ENCODE measurements at regions of chr6 and their contacts with region 1.

Region 1: DNA sequence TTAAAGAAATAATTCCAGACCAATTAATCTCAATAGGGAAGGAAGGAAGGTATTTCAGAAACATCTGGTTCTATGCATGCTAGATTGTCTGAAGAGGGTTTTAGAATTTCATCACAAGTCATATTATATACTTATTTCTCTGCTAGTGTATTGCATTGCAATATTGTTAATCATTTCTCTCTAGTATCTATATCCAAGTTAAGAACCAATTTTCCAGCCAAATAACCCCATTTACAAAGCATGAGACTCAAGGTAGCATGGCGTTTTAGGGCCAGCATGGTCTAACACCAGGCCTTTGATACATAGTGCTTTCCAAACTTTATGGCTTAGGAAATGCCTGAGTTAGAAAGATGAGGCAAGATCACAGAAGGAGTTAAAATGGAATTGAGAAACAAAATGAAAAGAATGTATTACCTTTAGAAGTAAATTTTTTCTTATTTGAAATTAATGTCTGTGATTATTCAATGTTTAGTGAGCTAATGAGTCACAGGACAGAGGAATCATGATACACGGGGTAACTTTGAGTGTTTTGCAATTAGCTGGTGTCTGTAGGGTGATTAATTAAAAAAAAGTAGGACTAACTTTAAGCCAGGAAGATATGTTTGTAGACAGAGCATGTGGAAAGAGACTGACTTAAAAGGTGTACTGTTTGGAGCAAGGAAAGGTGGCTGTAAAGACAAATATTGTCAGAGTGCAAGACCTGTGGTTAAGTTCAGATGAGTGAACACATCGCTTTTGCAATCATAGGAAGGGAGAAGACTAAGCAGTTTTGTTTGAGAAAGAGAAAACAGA is 1006.2 kb upstream of the CITED2 start:
- DNase-seq: peak; percentile 2
- ATAC-seq: no peak
- H3K4me3 ChIP-seq: no peak overlapping the region
- H3K27ac ChIP-seq: no peak overlapping the region
- H3K4me1 ChIP-seq: peaks cover 4% of the 10 kb centered on the region; the same call in 1 of the 2 replicates
- H3K27me3 ChIP-seq: no peaks in the 10 kb centered on the region
- CTCF ChIP-seq: no peak

Region 2: GRCh38 chr6:140124498-140124897 is 256.1 kb before region 1 on chr6:
- CTCF ChIA-PET with region 1: no interaction called
- POLR2A ChIA-PET with region 1: no interaction called
- intact Hi-C with region 1: loop called (anchors 5 kb)
- DNase-seq: no peak
- ATAC-seq: no peak
- H3K4me3 ChIP-seq: no peak overlapping the region
- H3K27ac ChIP-seq: no peak overlapping the region
- H3K4me1 ChIP-seq: no peaks in the 10 kb centered on the region
- H3K27me3 ChIP-seq: no peaks in the 10 kb centered on the region
- CTCF ChIP-seq: no peak

Region 3: DNA sequence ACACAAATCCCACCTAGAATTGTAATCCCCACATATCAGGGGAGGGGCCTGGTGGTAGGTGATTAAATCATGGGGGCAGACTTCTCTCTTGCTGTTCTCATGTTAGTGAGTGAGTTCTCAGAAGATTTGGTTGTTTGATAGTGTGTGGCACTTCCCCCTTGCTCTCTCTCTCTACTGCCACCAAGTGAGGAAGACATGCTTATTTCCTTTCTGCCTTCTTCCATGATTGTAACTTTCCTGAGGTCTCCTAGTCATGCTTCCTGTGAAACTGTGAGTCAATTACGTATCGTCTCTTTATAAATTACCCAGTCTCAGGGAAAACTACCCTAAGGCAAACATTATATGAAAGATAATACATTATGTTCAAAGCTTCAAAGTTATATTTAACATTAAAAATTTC is 291.3 kb after region 1 on chr6:
- CTCF ChIA-PET with region 1: no interaction called
- POLR2A ChIA-PET with region 1: no interaction called
- intact Hi-C with region 1: no loop called
- DNase-seq: peak; percentile 46
- ATAC-seq: no peak
- H3K4me3 ChIP-seq: no peak overlapping the region
- H3K27ac ChIP-seq: no peak overlapping the region
- H3K4me1 ChIP-seq: no peaks in the 10 kb centered on the region
- H3K27me3 ChIP-seq: no peaks in the 10 kb centered on the region
- CTCF ChIP-seq: no peak; the same call in 1 of the 2 replicates

Measured in PC-3 (cell line).